CD8-positive, alpha-beta T cell (primary cell): ENCODE measurements at regions of chr1 and their contacts with region 1.

Region 1: GRCh38 chr1:241531195-241532161 is 700 bp upstream of the KMO start:
- DNase-seq: peak in 2 of 9 experiments; percentile 67 to 79
- ATAC-seq: peak; percentile 88
- H3K4me3 ChIP-seq: peak overlapping the region; percentile 52 to 63
- H3K4me3 Mint-ChIP-seq: peak overlapping the region; percentile 93
- H3K27ac ChIP-seq: peak overlapping the region; percentile 4 to 11
- H3K27ac Mint-ChIP-seq: peak overlapping the region; percentile 77
- H3K4me1 ChIP-seq: peaks cover 4% of the 10 kb centered on the region
- H3K4me1 Mint-ChIP-seq: peaks cover 14% of the 10 kb centered on the region
- H3K27me3 ChIP-seq: peaks cover 0 to 2% of the 10 kb centered on the region in 2 experiments
- H3K27me3 Mint-ChIP-seq: no peaks in the 10 kb centered on the region
- CTCF ChIP-seq: peak; percentile 77

Region 2: DNA sequence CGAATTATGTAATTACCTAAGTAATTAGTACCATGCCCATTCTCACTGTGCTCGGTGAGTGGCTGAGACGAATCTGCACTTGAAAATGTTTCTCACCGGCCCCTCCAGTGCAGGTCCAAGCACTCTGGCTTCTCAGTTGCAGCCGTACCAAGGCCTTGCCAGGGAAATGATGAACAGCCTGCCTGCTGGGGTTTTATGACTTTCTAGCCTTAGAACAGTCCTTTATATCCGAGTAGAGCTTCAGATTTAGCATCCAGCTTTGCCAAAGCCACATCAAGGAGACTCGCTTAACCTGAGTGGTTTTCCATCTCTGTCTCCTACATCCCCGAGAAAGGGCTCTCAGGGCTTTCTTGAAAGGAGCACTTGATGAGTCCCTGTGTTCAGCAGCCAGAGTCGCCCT is 1002.9 kb before region 1 on chr1:
- CTCF ChIA-PET with region 1: no interaction called
- POLR2A ChIA-PET with region 1: no interaction called
- intact Hi-C with region 1: no loop called
- DNase-seq: no peak
- ATAC-seq: no peak
- H3K4me3 ChIP-seq: no peak overlapping the region
- H3K4me3 Mint-ChIP-seq: no peak overlapping the region
- H3K27ac ChIP-seq: no peak overlapping the region
- H3K27ac Mint-ChIP-seq: no peak overlapping the region
- H3K4me1 ChIP-seq: no peaks in the 10 kb centered on the region
- H3K4me1 Mint-ChIP-seq: no peaks in the 10 kb centered on the region
- H3K27me3 ChIP-seq: no peaks in the 10 kb centered on the region
- H3K27me3 Mint-ChIP-seq: no peaks in the 10 kb centered on the region
- CTCF ChIP-seq: no peak

Region 3: GRCh38 chr1:241519308-241520079 is 12.0 kb before region 1 on chr1 and contains the start of gene FH:
- CTCF ChIA-PET with region 1: no interaction called
- POLR2A ChIA-PET with region 1: interaction called, 3 read pairs
- intact Hi-C with region 1: loop called in 1 of 2 experiments (anchors 1 kb)
- DNase-seq: peak; percentile 83 to 98 (median 92)
- ATAC-seq: peak; percentile 98
- H3K4me3 ChIP-seq: peak within 1 kb of the TSS; percentile 56 to 75
- H3K4me3 Mint-ChIP-seq: peak within 1 kb of the TSS; percentile 94
- H3K27ac ChIP-seq: peak within 1 kb of the TSS; percentile 50 to 64
- H3K27ac Mint-ChIP-seq: peak within 1 kb of the TSS; percentile 90
- H3K4me1 ChIP-seq: peaks cover 11% of the 10 kb centered on the region
- H3K4me1 Mint-ChIP-seq: peaks cover 30% of the 10 kb centered on the region
- H3K27me3 ChIP-seq: peaks cover 5 to 6% of the 10 kb centered on the region in 2 experiments
- H3K27me3 Mint-ChIP-seq: peaks cover 22% of the 10 kb centered on the region
- CTCF ChIP-seq: no peak
- total RNA-seq, gene FH: 12.1 to 14.0 TPM

Region 4: DNA sequence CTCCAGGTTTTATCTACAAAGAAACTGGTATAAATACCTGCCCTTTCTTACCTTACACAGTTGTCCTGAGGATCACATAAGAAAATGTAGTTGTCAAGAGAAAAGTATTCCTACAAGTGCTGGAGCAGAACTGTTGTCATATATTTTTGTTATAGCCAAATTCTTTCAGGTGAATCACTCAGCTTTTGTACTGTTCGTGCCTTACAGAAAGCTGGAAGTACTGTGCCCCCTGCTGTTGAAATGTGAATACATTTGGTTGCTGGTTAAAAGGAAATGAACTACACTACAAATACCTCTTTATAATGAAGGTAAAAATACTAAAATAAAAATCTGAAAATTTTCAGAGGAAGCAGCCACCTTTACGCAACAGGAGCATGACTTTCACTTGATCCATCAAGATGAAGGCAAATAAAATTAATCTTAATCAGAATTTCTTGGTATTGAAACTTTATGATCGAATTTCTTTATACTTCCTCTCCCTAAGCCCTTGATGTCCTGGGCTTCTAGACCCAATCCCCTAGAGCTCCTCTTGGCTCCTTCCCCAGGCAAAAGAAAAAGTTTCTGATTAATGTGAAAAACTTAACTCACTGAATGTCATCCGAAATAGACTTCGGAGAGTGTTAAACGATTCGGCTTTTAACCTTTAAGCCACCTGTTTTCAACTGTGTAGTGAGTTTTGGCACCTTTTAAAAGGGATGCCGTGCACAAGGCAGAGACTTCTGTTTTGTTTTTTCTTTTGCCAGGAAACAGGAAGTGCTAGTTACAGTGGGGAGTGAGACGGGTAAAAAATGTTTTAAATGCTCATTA is 96.2 kb after region 1 on chr1:
- CTCF ChIA-PET with region 1: interaction called, 6 read pairs
- POLR2A ChIA-PET with region 1: no interaction called
- intact Hi-C with region 1: loop called (anchors 1 kb)
- DNase-seq: peak in 6 of 9 experiments; percentile 13 to 81 (median 43)
- ATAC-seq: peak; percentile 77
- H3K4me3 ChIP-seq: peak overlapping the region; percentile 25 to 29
- H3K4me3 Mint-ChIP-seq: peak overlapping the region; percentile 77
- H3K27ac ChIP-seq: peak overlapping the region; percentile 38 to 45
- H3K27ac Mint-ChIP-seq: peak overlapping the region; percentile 92
- H3K4me1 ChIP-seq: peaks cover 4% of the 10 kb centered on the region
- H3K4me1 Mint-ChIP-seq: peaks cover 24% of the 10 kb centered on the region
- H3K27me3 ChIP-seq: no peaks in the 10 kb centered on the region
- H3K27me3 Mint-ChIP-seq: no peaks in the 10 kb centered on the region
- CTCF ChIP-seq: peak; percentile 79

Region 5: DNA sequence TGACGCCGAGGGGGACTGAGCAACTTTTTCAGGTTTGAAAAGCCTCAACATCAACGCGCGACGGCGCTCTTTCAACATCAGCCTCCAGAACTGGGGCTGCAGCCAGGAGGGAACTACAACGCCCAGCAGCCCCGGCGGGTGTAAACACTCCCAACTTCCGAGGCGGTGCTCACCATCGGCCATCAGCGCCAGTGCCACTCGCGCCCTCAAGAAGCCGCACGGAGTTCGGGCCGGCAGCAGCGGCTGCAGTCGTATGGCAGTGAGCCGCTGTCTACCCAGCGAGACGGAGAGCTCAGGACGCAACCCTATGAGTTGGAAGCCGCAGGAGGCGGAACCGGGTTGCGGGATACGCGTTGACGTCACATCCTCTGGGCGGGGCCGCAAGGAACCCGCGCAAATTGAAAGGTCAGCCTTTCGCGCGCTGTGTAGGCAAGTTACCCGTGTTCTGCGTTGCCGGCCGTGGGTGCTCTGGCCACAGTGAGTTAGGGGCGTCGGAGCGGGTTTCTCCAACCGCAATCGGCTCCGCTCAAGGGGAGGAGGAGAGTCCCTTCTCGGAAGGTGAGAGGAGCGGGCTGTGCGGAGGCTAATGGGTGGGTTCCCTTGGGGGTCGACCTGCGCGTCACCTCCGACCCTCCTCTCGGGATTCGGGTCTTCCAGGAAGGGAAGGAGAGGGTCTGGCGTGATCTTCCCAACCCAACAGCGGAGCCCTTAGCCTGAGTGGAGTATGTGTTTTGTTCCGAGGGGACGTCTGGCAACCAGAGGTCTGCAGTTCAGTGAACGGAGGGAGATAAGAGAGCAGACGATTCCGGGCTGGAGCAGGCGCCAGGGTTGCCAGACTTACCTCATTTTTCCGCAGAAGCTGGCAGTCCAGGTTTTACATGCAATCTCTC is 316.6 kb after region 1 on chr1 and contains the start of gene EXO1:
- CTCF ChIA-PET with region 1: no interaction called
- POLR2A ChIA-PET with region 1: no interaction called
- intact Hi-C with region 1: loop called in 1 of 2 experiments (anchors 5 kb)
- DNase-seq: peak; percentile 78 to 95 (median 88)
- ATAC-seq: peak; percentile 97
- H3K4me3 ChIP-seq: peak within 1 kb of the TSS; percentile 94 to 100
- H3K4me3 Mint-ChIP-seq: peak within 1 kb of the TSS; percentile 100
- H3K27ac ChIP-seq: peak within 1 kb of the TSS; percentile 94 to 98
- H3K27ac Mint-ChIP-seq: peak within 1 kb of the TSS; percentile 99
- H3K4me1 ChIP-seq: peaks cover 9% of the 10 kb centered on the region
- H3K4me1 Mint-ChIP-seq: peaks cover 18% of the 10 kb centered on the region
- H3K27me3 ChIP-seq: no peaks in the 10 kb centered on the region
- H3K27me3 Mint-ChIP-seq: no peaks in the 10 kb centered on the region
- CTCF ChIP-seq: peak; percentile 29
- total RNA-seq, gene EXO1: 1.5 to 2.4 TPM

Region 6: GRCh38 chr1:242017584-242018233 is 486.2 kb after region 1 on chr1:
- CTCF ChIA-PET with region 1: no interaction called
- POLR2A ChIA-PET with region 1: no interaction called
- intact Hi-C with region 1: loop called in 1 of 2 experiments (anchors 2 kb)
- DNase-seq: peak in 5 of 9 experiments; percentile 2 to 52 (median 32)
- ATAC-seq: no peak
- H3K4me3 ChIP-seq: no peak overlapping the region
- H3K4me3 Mint-ChIP-seq: no peak overlapping the region
- H3K27ac ChIP-seq: no peak overlapping the region
- H3K27ac Mint-ChIP-seq: no peak overlapping the region
- H3K4me1 ChIP-seq: no peaks in the 10 kb centered on the region
- H3K4me1 Mint-ChIP-seq: no peaks in the 10 kb centered on the region
- H3K27me3 ChIP-seq: peaks cover 0 to 2% of the 10 kb centered on the region in 2 experiments
- H3K27me3 Mint-ChIP-seq: no peaks in the 10 kb centered on the region
- CTCF ChIP-seq: peak; percentile 37